ENCODE measurements at regions of chrX and their contacts with region 1.

Region 1: DNA sequence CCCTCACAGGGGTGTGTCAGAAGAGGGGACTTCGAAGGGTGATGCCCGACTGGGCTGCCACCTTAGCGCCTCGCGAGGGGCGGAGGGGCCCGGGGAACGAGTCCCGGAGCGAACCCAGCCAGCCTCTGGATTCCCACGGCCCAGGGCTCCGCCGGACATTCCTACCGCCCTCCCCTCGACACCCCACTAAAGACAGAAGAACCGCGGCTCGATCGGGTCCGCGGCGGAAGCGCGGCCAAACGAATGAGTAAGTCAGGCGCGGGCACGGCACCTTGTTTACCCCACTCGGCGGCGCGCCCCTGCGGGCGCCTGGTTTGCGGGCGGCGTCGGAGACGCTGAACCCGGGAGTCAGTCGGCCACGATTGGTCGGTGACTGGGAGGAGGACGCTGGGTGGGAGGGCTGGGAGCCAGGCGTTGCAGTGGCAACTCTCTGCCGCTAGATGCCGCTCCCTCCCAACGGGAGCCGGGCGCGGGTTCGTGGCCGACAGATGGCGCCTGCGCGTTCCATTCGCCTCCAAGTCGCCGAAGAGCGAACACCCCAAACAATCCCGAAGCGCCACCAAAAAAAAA is 1.4 kb upstream of the STAG2 start:
- DNase-seq: peak; percentile 69
- ATAC-seq: peak; percentile 82
- H3K4me3 ChIP-seq: peak overlapping the region; percentile 70
- H3K27ac ChIP-seq: peak overlapping the region; percentile 89
- H3K4me1 ChIP-seq: no peaks in the 10 kb centered on the region
- H3K27me3 ChIP-seq: no peaks in the 10 kb centered on the region
- CTCF ChIP-seq: peak; percentile 77 to 98 (median 91)
- EP300 ChIP-seq: no peak
- POLR2A ChIP-seq: peak; percentile 70; the same call in 1 of the 2 replicates
- RAD21 ChIP-seq: peak; percentile 76

Region 2: DNA sequence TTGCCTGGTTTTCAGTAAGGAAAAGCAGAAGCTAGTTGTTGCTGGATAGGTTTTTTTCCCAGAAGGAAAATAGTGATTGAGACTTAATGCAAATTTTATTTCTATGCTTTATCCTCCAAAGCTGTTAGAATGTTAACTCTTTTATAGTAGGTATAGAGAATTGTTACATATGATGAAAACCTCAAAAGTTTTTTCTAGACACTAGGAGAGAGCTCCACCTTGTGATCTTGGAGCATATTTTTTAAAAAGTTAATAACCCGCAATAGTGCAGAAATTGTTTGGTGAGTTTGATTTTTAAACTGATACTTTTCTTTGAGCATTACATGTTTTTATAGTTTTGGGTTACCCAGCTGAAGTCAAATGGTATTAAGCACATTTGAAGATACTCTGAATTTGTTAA is 57.9 kb after region 1 on chrX:
- CTCF ChIA-PET with region 1: interaction called, 6 read pairs
- POLR2A ChIA-PET with region 1: interaction called, 7 read pairs
- RAD21 ChIA-PET with region 1: interaction called, 4 read pairs
- SMC1A ChIA-PET with region 1: interaction called, 5 read pairs
- in situ Hi-C with region 1: no loop called
- intact Hi-C with region 1: loop called (anchors 5 kb)
- DNase-seq: no peak
- ATAC-seq: no peak
- H3K4me3 ChIP-seq: no peak overlapping the region
- H3K27ac ChIP-seq: no peak overlapping the region
- H3K4me1 ChIP-seq: no peaks in the 10 kb centered on the region
- H3K27me3 ChIP-seq: no peaks in the 10 kb centered on the region
- CTCF ChIP-seq: peak in 1 of 3 experiments; percentile 17; a peak in 1 of 6 replicates
- EP300 ChIP-seq: no peak
- POLR2A ChIP-seq: no peak
- RAD21 ChIP-seq: peak; percentile 34; the same call in 1 of the 2 replicates

Region 3: DNA sequence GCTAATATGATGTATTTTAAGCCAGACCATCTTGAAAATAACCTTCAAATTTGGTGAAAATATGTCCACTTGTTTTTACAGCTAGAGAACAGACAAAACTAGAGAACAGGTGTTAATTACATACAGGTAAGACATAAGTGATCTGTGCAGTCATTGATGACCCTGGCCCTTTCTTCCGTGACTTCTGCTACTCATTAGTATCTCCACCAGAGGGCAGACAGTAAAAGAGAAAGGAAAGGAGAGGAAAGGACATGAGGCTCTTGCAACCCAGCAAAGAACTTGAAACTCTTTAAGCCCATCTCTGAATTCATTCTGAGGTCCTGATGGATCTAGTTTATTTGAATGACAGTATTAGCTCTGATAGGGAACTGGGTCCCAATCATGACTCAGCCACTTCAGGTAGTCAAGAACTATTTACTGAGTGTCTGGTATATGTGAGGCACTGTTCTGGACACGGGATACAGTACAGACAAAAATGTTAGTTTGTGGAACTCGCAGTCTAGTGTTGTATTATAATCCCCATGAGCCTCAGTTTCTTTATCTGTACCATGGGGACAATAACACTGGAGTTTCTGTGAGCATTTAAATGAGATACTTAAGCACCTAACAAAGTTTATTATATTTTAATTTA is 251.3 kb after region 1 on chrX:
- CTCF ChIA-PET with region 1: no interaction called
- POLR2A ChIA-PET with region 1: no interaction called
- RAD21 ChIA-PET with region 1: no interaction called
- SMC1A ChIA-PET with region 1: no interaction called
- in situ Hi-C with region 1: no loop called
- intact Hi-C with region 1: loop called (anchors 2 kb)
- DNase-seq: no peak
- ATAC-seq: peak; percentile 95
- H3K4me3 ChIP-seq: no peak overlapping the region
- H3K27ac ChIP-seq: no peak overlapping the region
- H3K4me1 ChIP-seq: peaks cover under 1% of the 10 kb centered on the region; the same call in 1 of the 2 replicates
- H3K27me3 ChIP-seq: no peaks in the 10 kb centered on the region
- CTCF ChIP-seq: peak; percentile 60 to 67 (median 61); a peak in 5 of 6 replicates
- EP300 ChIP-seq: no peak
- POLR2A ChIP-seq: no peak
- RAD21 ChIP-seq: peak; percentile 76

Region 4: GRCh38 chrX:124395145-124395880 is 435.2 kb after region 1 on chrX:
- CTCF ChIA-PET with region 1: no interaction called
- POLR2A ChIA-PET with region 1: no interaction called
- RAD21 ChIA-PET with region 1: interaction called, 5 read pairs
- SMC1A ChIA-PET with region 1: no interaction called
- in situ Hi-C with region 1: no loop called
- intact Hi-C with region 1: loop called (anchors 10 kb)
- DNase-seq: no peak
- ATAC-seq: peak; percentile 72
- H3K4me3 ChIP-seq: no peak overlapping the region
- H3K27ac ChIP-seq: no peak overlapping the region
- H3K4me1 ChIP-seq: peaks cover 3% of the 10 kb centered on the region; the same call in 1 of the 2 replicates
- H3K27me3 ChIP-seq: no peaks in the 10 kb centered on the region
- CTCF ChIP-seq: no peak
- EP300 ChIP-seq: no peak
- POLR2A ChIP-seq: no peak
- RAD21 ChIP-seq: no peak